ENCODE measurements at regions of chr11 and their contacts with region 1.

Region 1: GRCh38 chr11:73366265-73366610 is 10.0 kb upstream of the RELT start:
- DNase-seq: peak; percentile 60
- ATAC-seq: peak; percentile 88
- H3K4me3 Mint-ChIP-seq: peak overlapping the region; percentile 37
- H3K27ac Mint-ChIP-seq: peak overlapping the region; percentile 83
- H3K4me1 Mint-ChIP-seq: peaks cover 25% of the 10 kb centered on the region
- H3K27me3 Mint-ChIP-seq: no peaks in the 10 kb centered on the region

Region 2: DNA sequence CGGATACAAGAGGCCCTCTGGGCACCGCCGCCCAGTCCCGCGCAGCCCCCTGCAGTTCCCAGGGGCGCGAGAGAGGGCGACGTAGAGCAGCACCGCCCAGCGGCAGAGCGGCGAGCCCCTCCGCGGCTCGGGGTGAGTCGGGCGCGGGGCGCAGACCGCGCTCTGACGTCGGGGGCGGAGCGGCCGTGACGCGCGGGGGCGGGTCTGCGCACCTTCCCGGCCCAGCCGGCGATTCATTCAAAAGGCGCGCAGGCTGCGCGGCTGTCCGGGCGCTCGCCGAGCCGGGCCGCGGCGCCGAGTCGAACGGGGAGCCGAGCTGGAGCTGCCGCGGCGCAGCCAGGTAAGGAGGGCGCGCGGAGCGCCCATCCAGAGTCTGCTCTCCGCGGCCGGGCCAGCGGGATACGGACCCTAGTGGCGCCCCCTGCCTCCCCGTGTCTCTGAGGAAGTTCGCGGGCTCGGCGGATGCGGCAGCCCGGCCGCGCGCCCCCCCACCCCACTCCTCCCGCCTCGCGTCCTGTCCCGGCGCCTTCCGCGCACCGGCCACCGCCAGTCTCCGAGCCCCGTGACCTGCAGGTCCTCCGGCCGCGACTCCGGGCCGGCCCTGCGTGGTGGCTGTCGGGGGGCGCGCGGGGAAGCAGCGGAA is 10.0 kb after region 1 on chr11 and contains the start of gene RELT:
- CTCF ChIA-PET with region 1: interaction called, 20 read pairs
- DNase-seq: peak; percentile 94
- ATAC-seq: peak; percentile 81
- H3K4me3 Mint-ChIP-seq: peak within 1 kb of the TSS; percentile 97
- H3K27ac Mint-ChIP-seq: peak within 1 kb of the TSS; percentile 99
- H3K4me1 Mint-ChIP-seq: peaks cover 49% of the 10 kb centered on the region
- H3K27me3 Mint-ChIP-seq: no peaks in the 10 kb centered on the region
- total RNA-seq, gene RELT: 31.2 to 39.6 TPM

Measured in activated CD8-positive, alpha-beta memory T cell treated with anti-CD3 and anti-CD28 coated beads, Interleukin-2, amount 10 ng/mL, durations not matched to agents 7 days and 5 days (primary cell).